ENCODE measurements at regions of chr20 and their contacts with region 1.

Region 1: GRCh38 chr20:23727016-23727415 is 23.7 kb downstream of the CST1 start:
- DNase-seq: no peak
- H3K4me3 ChIP-seq: no peak overlapping the region
- H3K27ac ChIP-seq: no peak overlapping the region
- H3K4me1 ChIP-seq: peaks cover 7% of the 10 kb centered on the region
- H3K27me3 ChIP-seq: no peaks in the 10 kb centered on the region
- CTCF ChIP-seq: no peak

Region 2: DNA sequence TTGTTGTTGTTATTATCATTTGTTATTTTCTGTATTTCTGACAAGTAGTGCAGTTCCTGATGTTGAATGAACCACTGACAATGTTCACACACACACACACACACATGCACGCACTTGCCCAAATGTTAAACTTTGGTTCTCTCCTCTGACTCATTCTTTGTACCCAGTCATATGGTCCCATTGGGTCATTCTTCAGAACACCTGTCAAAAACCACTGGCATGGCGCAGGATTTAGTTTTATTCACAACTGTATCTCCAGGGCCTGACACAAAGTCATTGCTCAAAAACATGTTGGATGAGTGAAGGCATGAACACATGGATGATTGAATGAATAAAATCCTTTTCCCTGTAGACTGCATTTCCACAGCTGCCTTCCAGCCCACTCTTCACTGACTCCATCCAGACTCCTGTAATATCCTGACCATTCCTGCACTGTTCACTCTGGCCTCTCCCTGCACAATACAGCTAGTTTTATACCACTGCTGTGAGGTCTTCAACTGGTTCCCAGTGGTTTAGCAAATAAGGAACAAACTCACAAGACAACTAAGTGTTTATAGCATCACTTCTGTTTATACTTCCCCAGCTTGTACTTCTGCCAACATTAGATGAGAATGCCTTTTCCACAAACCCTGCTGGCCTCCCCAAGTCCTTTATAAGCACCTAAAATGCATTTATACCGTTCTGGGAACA is 267.4 kb before region 1 on chr20:
- CTCF ChIA-PET with region 1: no interaction called
- POLR2A ChIA-PET with region 1: no interaction called
- intact Hi-C with region 1: no loop called
- DNase-seq: no peak
- H3K4me3 ChIP-seq: no peak overlapping the region
- H3K27ac ChIP-seq: no peak overlapping the region
- H3K4me1 ChIP-seq: no peaks in the 10 kb centered on the region
- H3K27me3 ChIP-seq: peaks cover 22% of the 10 kb centered on the region; the same call in 1 of the 2 replicates
- CTCF ChIP-seq: no peak

Region 3: GRCh38 chr20:23782366-23782985 is 55.5 kb after region 1 on chr20:
- CTCF ChIA-PET with region 1: no interaction called
- POLR2A ChIA-PET with region 1: no interaction called
- intact Hi-C with region 1: loop called (anchors 5 kb)
- DNase-seq: peak; percentile 36 to 61
- H3K4me3 ChIP-seq: no peak overlapping the region
- H3K27ac ChIP-seq: no peak overlapping the region
- H3K4me1 ChIP-seq: no peaks in the 10 kb centered on the region
- H3K27me3 ChIP-seq: no peaks in the 10 kb centered on the region
- CTCF ChIP-seq: peak; percentile 73

Region 4: DNA sequence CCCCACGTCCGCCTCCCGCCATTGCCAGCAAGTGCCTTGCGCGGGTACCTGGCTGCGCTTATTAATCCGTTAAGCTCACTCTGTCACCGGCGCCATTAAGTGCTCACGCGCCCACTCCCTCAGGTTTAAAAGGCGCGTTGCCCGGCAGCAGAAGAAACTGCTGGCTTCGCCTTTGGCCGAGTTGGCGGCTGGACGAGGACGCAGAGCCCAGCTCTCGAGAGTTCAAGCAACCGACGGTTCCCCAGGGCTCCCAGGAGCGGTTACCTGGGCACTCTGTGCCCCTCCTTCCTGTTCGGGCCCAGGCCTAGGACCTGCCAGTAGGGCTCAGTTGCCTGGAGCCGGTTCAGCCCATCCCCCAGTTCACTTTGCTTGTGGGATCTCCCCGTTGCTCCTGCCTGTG is 261.5 kb after region 1 on chr20 and contains the start of gene GGTLC1:
- CTCF ChIA-PET with region 1: no interaction called
- POLR2A ChIA-PET with region 1: no interaction called
- intact Hi-C with region 1: no loop called
- DNase-seq: no peak
- H3K4me3 ChIP-seq: no peak within 1 kb of the TSS
- H3K27ac ChIP-seq: no peak within 1 kb of the TSS
- H3K4me1 ChIP-seq: no peaks in the 10 kb centered on the region
- H3K27me3 ChIP-seq: no peaks in the 10 kb centered on the region
- CTCF ChIP-seq: no peak
- total RNA-seq, gene GGTLC1: 0.43 and 0.63 TPM in 2 replicates

Measured in PC-9 (cell line).